ENCODE measurements at regions of chr19 and their contacts with region 1.

Region 1: DNA sequence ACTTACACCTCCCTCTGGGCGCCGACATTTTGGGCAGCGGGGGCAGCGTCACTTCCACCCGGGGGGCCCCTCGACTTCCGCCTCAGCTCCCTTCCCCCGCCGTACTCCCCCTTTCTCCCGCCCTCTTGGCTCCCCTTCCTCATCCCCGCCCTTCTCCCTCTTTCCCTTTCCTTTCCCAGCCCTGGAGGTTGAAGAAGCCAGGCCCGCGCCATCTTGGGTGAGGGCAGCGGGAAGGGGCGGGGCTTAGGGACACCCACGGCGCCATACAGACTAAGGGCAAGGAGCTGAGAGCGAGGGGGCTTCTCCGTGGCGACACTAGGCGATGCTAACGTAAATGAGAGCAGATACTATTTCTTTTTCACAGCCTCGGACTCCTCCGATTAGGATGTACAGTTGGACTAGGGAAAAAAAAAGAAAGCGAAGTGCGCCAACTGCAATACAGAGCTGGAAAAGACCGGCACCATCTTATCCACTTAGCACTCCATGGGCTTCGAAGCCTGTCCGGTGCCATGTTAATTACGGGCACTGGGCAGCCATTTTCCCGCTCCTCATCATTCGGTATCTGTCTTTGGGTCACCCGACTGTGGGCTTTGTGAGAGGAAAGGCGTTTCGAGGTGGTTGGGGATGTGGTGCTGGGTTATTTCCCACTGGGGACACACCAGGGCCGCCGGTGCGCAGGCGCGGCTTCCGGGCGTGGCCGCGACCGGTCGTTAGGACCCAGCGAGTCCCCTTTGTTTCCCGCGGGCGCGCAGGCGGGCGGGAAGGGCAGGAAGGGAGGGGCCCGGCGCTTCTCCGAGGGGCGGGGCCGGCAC is at the start of gene FIZ1:
- DNase-seq: peak; percentile 97 to 99
- H3K4me3 ChIP-seq: peak within 1 kb of the TSS; percentile 82 to 89
- H3K27ac ChIP-seq: peak within 1 kb of the TSS; percentile 99 to 100
- H3K4me1 ChIP-seq: peaks cover 3 to 4% of the 10 kb centered on the region in 2 donors
- H3K27me3 ChIP-seq: no peaks in the 10 kb centered on the region
- CTCF ChIP-seq: no peak
- total RNA-seq, gene FIZ1: 30.5 TPM

Region 2: GRCh38 chr19:55279770-55280643 is 319.7 kb before region 1 on chr19 and contains the start of gene HSPBP1:
- intact Hi-C with region 1: loop called (anchors 10 kb)
- DNase-seq: peak; percentile 85 to 97
- H3K4me3 ChIP-seq: peak within 1 kb of the TSS; percentile 71 to 84
- H3K27ac ChIP-seq: peak within 1 kb of the TSS; percentile 66 to 68
- H3K4me1 ChIP-seq: peaks cover 11 to 16% of the 10 kb centered on the region in 2 donors
- H3K27me3 ChIP-seq: no peaks in the 10 kb centered on the region
- CTCF ChIP-seq: no peak
- total RNA-seq, gene HSPBP1: 72.7 TPM

Region 3: GRCh38 chr19:55407800-55408532 is 191.7 kb before region 1 on chr19:
- intact Hi-C with region 1: loop called (anchors 1 kb)
- DNase-seq: peak; percentile 95 to 99
- H3K4me3 ChIP-seq: peak overlapping the region; percentile 86 to 92
- H3K27ac ChIP-seq: peak overlapping the region; percentile 96 to 99
- H3K4me1 ChIP-seq: peaks cover 11 to 13% of the 10 kb centered on the region in 2 donors
- H3K27me3 ChIP-seq: no peaks in the 10 kb centered on the region
- CTCF ChIP-seq: no peak

Region 4: GRCh38 chr19:55476100-55476775 is 123.4 kb before region 1 on chr19 and contains the start of gene ZNF628:
- intact Hi-C with region 1: loop called (anchors 1 kb)
- DNase-seq: peak; percentile 93 to 99
- H3K4me3 ChIP-seq: peak within 1 kb of the TSS; percentile 82 to 84
- H3K27ac ChIP-seq: peak within 1 kb of the TSS; percentile 95 to 99
- H3K4me1 ChIP-seq: peaks cover 8 to 11% of the 10 kb centered on the region in 2 donors
- H3K27me3 ChIP-seq: no peaks in the 10 kb centered on the region
- CTCF ChIP-seq: no peak
- total RNA-seq, gene ZNF628: 13.2 TPM

Region 5: GRCh38 chr19:55549500-55550320 is 50.0 kb before region 1 on chr19:
- intact Hi-C with region 1: loop called (anchors 2 kb)
- DNase-seq: peak in 1 of 2 donors; percentile 77
- H3K4me3 ChIP-seq: peak overlapping the region; percentile 30 to 45
- H3K27ac ChIP-seq: peak overlapping the region; percentile 61 to 70
- H3K4me1 ChIP-seq: peaks cover 5 to 33% of the 10 kb centered on the region in 2 donors
- H3K27me3 ChIP-seq: no peaks in the 10 kb centered on the region
- CTCF ChIP-seq: no peak

Region 6: DNA sequence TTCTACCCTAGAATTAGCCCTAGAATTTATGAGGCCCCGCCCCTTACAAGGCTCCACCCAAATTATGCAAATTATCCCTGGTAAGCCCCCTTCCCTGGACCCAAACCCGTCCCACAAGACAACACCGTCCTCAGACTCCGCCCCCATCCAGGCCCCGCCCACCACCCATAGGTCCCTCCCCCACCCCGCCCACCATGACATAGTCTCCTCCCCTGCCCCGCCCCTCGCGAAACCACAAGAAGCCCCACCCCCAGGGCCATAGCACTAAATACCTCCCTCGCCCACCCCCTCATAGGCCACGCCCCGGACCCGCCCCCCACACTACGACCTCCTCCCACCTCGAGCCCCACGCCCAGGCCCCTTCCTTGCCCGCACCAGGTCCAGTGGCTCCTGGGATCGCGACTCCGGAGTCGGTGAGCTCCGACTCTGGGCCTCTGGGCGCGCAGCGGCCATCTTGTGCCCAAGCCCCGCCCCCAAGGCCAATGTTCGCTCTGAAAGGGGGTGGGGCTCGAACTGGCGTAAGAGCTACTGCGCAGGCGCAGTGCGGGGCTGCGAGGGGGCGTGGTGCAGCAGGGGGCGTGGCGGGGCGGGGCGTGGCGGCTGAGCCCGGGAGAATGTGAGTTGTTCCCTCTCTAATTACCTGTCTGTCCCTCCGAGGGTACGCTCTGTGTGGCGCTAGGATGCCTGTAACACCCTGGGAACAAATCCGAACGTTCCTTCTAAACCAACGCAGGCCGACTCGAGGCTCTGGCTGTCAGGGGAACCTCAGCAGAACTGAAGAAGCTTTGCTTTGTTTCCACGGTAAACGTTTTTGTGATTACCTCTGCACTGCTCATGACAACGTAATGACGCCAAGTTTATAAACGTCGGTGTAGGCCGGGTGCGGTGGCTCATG is 24.7 kb after region 1 on chr19 and contains the start of gene ZNF784:
- intact Hi-C with region 1: loop called (anchors 1 kb)
- DNase-seq: peak; percentile 67 to 95
- H3K4me3 ChIP-seq: peak within 1 kb of the TSS; percentile 60 to 73
- H3K27ac ChIP-seq: peak within 1 kb of the TSS; percentile 96 to 97
- H3K4me1 ChIP-seq: peaks cover 0 to 5% of the 10 kb centered on the region in 2 donors
- H3K27me3 ChIP-seq: no peaks in the 10 kb centered on the region
- CTCF ChIP-seq: no peak
- total RNA-seq, gene ZNF784: 14.7 TPM

Region 7: GRCh38 chr19:55738302-55738701 is 138.6 kb after region 1 on chr19 and contains the start of gene NLRP9:
- intact Hi-C with region 1: no loop called
- DNase-seq: no peak
- H3K4me3 ChIP-seq: no peak within 1 kb of the TSS
- H3K27ac ChIP-seq: no peak within 1 kb of the TSS
- H3K4me1 ChIP-seq: no peaks in the 10 kb centered on the region
- H3K27me3 ChIP-seq: no peaks in the 10 kb centered on the region
- CTCF ChIP-seq: no peak
- total RNA-seq, gene NLRP9: not detected